ENCODE measurements at regions of chr2 and their contacts with region 1.

Region 1: DNA sequence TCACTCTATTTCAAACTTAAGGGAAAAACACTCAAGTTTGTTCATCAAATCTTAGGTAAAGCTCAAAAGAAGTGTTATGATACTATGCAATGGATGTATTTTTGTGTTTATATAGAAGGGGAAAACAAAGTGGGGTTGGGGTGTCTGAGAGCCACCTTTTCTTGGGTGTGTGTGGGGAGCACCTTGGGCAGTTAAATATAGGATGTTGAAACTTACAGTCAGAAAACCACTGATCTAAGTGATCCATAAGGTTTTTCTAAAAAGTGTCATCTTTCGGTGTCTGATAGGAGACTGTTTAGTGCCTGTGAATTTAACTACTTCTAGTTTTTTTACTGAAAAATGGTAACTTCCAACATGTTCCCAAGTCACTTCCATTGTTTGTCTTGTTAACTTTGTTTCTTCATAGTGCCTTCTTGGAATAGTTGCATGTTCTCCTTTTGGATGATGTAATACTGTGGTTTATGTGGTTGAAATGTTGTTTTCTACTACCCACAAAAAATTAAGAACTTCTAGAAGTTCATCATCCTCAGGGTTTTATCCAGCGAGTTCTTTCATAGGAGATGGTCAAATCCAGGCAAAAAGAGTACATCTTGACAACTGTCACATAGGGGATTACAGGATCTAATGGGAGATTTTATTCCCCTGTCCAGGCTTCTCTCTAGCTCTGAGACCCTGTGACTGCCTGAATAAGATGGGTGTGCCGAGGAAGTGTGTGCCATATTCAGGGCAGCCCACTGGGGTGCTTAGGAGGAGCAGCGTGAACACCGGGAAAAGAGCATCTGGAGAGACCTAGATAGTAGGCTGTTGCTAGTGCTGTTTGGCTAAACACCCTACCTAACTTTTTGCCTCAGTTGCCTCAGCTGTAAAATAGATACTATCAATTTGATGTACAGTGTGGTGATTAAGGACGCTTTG is 46.2 kb downstream of the CAB39 start:
- DNase-seq: no peak
- ATAC-seq: no peak
- H3K4me3 ChIP-seq: no peak overlapping the region
- H3K4me3 Mint-ChIP-seq: peak overlapping the region; percentile 63
- H3K27ac ChIP-seq: no peak overlapping the region
- H3K27ac Mint-ChIP-seq: peak overlapping the region; percentile 45 to 84
- H3K4me1 ChIP-seq: peaks cover 30% of the 10 kb centered on the region
- H3K4me1 Mint-ChIP-seq: peaks cover 61 to 65% of the 10 kb centered on the region in 2 donors
- H3K27me3 ChIP-seq: no peaks in the 10 kb centered on the region
- H3K27me3 Mint-ChIP-seq: no peaks in the 10 kb centered on the region
- CTCF ChIP-seq: no peak

Region 2: DNA sequence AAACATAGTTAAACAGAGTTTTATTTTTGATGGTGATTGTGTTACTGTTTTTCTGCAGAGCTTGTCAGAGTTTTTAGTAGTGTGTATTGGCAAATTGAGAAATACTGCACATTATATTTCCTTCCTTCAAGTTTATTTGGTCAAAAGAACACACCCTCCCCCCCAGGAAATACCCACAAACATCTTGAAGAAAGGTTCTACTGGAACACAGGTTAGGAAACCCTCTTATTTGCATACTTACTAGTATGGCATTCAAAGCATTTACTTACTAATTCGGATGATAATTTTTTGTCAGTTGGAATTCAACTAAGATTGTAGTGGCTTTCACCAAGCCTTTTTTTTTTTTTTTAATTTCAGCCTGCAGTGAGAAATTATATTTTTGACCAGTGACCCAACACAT is 37.1 kb before region 1 on chr2:
- intact Hi-C with region 1: loop called (anchors 5 kb)
- DNase-seq: peak in 1 of 2 donors; percentile 50
- ATAC-seq: peak in 1 of 3 donors; percentile 24
- H3K4me3 ChIP-seq: no peak overlapping the region
- H3K4me3 Mint-ChIP-seq: peak overlapping the region; percentile 47
- H3K27ac ChIP-seq: no peak overlapping the region
- H3K27ac Mint-ChIP-seq: peak overlapping the region; percentile 19 to 62
- H3K4me1 ChIP-seq: peaks cover 35% of the 10 kb centered on the region
- H3K4me1 Mint-ChIP-seq: peaks cover 62 to 64% of the 10 kb centered on the region in 2 donors
- H3K27me3 ChIP-seq: no peaks in the 10 kb centered on the region
- H3K27me3 Mint-ChIP-seq: no peaks in the 10 kb centered on the region
- CTCF ChIP-seq: no peak

Region 3: DNA sequence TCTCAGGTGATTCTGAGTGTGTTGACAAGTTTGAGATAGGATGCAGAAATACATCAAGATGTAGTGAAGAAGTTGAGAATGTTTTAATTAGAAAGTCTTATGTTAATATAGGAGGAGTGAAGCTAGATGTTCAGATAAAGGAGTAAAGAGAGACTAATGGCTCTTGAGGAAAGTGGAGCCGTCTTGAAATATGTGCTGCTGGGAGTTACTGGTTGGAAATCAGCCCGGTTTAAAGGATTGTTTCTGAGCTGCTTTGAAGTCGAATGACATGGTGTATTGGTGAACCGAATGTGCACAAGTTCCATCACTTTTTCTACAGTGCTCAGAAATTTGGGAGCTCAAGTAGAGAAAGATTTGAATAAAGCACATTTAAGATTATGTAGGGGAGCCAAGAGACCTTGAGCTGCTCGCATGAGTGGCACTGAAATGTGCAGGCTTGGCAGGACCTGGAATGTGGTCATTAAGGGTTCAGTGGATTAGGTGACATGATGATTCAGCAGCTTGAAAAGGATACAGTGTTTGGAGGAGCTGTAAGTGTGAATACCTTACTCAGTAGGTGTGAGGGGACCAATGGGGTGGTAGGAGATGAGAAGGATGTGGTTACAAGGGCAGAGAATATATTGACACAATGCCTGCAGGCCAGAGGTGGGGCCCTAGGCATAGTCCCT is 22.4 kb after region 1 on chr2:
- intact Hi-C with region 1: loop called (anchors 1 kb)
- DNase-seq: peak; percentile 51 to 76
- ATAC-seq: peak; percentile 91 to 96 (median 93)
- H3K4me3 ChIP-seq: no peak overlapping the region
- H3K4me3 Mint-ChIP-seq: peak overlapping the region; percentile 67
- H3K27ac ChIP-seq: no peak overlapping the region
- H3K27ac Mint-ChIP-seq: peak overlapping the region; percentile 54 to 67
- H3K4me1 ChIP-seq: peaks cover 46% of the 10 kb centered on the region
- H3K4me1 Mint-ChIP-seq: peaks cover 69 to 82% of the 10 kb centered on the region in 2 donors
- H3K27me3 ChIP-seq: no peaks in the 10 kb centered on the region
- H3K27me3 Mint-ChIP-seq: no peaks in the 10 kb centered on the region
- CTCF ChIP-seq: no peak